Activated naive CD8-positive, alpha-beta T cell treated with anti-CD3 and anti-CD28 coated beads, Interleukin-2, amount 10 ng/mL, durations not matched to agents 7 days and 5 days (primary cell): ENCODE measurements at regions of chr9 and their contacts with region 1.

Region 1: GRCh38 chr9:123322273-123323195 is 33.5 kb upstream of the CRB2 start:
- DNase-seq: peak; percentile 76
- ATAC-seq: peak; percentile 91
- H3K4me3 Mint-ChIP-seq: peak overlapping the region; percentile 66
- H3K27ac Mint-ChIP-seq: peak overlapping the region; percentile 94
- H3K4me1 Mint-ChIP-seq: peaks cover 50% of the 10 kb centered on the region
- H3K27me3 Mint-ChIP-seq: no peaks in the 10 kb centered on the region

Region 2: GRCh38 chr9:123305879-123306278 is 16.7 kb before region 1 on chr9:
- POLR2A ChIA-PET with region 1: interaction called, 16 read pairs
- DNase-seq: no peak
- ATAC-seq: no peak
- H3K4me3 Mint-ChIP-seq: no peak overlapping the region
- H3K27ac Mint-ChIP-seq: no peak overlapping the region
- H3K4me1 Mint-ChIP-seq: peaks cover 20% of the 10 kb centered on the region
- H3K27me3 Mint-ChIP-seq: no peaks in the 10 kb centered on the region

Region 3: GRCh38 chr9:123338710-123339665 is 16.5 kb after region 1 on chr9:
- POLR2A ChIA-PET with region 1: interaction called, 83 read pairs
- DNase-seq: peak; percentile 72
- ATAC-seq: peak; percentile 80
- H3K4me3 Mint-ChIP-seq: peak overlapping the region; percentile 89
- H3K27ac Mint-ChIP-seq: peak overlapping the region; percentile 98
- H3K4me1 Mint-ChIP-seq: peaks cover 36% of the 10 kb centered on the region
- H3K27me3 Mint-ChIP-seq: no peaks in the 10 kb centered on the region